K562 (cell line): ENCODE measurements at regions of chr12 and their contacts with region 1.

Region 1: GRCh38 chr12:17763366-17763765 is 326.6 kb downstream of the RERGL start:
- DNase-seq: no peak
- ATAC-seq: no peak
- H3K4me3 ChIP-seq: no peak overlapping the region
- H3K27ac ChIP-seq: no peak overlapping the region
- H3K4me1 ChIP-seq: no peaks in the 10 kb centered on the region
- H3K27me3 ChIP-seq: no peaks in the 10 kb centered on the region
- CTCF ChIP-seq: no peak
- EP300 ChIP-seq: no peak
- POLR2A ChIP-seq: no peak
- RAD21 ChIP-seq: no peak

Region 2: DNA sequence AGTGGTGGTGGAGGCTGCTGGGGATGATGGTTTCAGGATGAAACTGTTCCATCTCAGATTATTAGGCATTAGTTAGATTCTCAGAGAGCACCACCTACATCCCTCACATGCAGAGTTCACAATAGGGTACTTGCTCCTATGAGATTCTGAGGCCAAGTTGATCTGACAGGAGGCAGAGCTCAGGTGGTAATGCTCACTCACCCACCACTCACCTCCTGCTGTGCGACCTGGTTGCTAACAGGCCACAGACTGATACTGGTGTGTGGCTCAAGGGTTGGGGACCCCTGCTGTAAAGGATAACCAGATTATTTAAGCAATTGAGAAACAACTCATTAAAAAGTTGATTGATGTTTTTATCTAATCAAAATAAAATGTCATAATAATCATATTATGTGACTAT is 78.1 kb after region 1 on chr12:
- CTCF ChIA-PET with region 1: no interaction called
- POLR2A ChIA-PET with region 1: no interaction called
- in situ Hi-C with region 1: loop called (anchors 5 kb)
- intact Hi-C with region 1: no loop called
- DNase-seq: no peak
- ATAC-seq: no peak
- H3K4me3 ChIP-seq: no peak overlapping the region
- H3K27ac ChIP-seq: no peak overlapping the region
- H3K4me1 ChIP-seq: no peaks in the 10 kb centered on the region
- H3K27me3 ChIP-seq: no peaks in the 10 kb centered on the region
- CTCF ChIP-seq: no peak
- EP300 ChIP-seq: no peak
- POLR2A ChIP-seq: no peak
- RAD21 ChIP-seq: no peak

Region 3: DNA sequence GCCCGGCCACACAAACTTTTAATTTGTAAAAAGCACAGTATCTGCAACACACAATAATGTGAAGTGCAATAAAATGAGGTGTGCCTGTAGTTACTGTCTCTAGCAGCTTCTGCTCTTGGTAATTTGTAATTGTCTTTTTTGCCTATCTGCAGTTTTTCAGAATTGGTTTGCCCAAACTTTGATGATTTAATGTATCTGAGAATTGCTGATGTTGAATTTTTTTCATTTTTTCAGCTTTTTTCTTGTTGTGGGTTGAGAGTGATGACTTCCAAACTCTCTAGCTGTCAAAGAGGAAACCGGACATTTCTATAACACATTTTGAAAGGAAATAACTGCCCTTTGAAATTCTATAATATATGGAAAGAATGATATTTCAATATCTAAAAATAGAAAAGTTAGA is 89.7 kb after region 1 on chr12:
- CTCF ChIA-PET with region 1: no interaction called
- POLR2A ChIA-PET with region 1: no interaction called
- in situ Hi-C with region 1: no loop called
- intact Hi-C with region 1: loop called (anchors 5 kb)
- DNase-seq: no peak
- ATAC-seq: no peak
- H3K4me3 ChIP-seq: no peak overlapping the region
- H3K27ac ChIP-seq: no peak overlapping the region
- H3K4me1 ChIP-seq: no peaks in the 10 kb centered on the region
- H3K27me3 ChIP-seq: no peaks in the 10 kb centered on the region
- CTCF ChIP-seq: no peak
- EP300 ChIP-seq: no peak
- POLR2A ChIP-seq: no peak
- RAD21 ChIP-seq: no peak